Right ventricle myocardium inferior (tissue), 1 donor: ENCODE measurements at regions of chr5 and their contacts with region 1.

Region 1: DNA sequence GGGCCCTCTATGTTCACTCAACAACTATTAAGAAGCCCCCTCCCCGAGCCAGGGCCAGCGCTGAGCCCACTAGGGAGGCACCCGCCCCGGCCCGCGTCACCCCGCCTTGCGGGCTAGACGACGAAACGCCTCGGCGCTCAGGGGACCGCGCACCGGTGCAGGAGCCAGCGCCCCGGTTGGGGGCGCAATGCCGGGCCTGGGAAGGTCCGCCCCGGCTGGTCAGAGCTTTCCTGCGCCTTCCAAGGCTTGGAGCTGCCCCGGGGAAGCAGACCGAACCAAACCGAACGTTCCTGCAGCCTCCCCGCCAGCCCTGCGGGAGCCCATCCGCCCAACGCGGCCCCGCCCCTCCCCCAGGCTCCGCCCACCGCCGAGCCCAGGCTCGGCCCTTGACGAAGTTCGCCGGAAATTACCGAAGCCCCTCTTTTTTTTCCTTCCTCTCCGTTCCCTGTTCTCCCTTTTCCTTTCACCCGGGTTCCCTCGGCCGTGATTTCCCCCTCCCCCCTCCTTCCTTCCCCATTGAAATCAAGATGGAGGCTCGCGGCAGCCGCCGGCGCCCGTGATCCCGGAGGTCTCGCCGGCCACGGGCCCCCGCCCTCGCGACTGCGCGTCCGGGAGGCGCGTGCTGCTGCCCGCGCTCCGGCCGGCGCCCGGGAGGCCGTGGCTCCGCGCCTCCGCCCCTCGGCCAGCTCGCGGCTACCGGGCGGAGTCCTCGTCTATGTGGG is at the start of gene TRIO:
- DNase-seq: peak; percentile 92
- ATAC-seq: peak; percentile 86
- total RNA-seq, gene TRIO: 56.9 TPM

Region 2: GRCh38 chr5:13921578-13921977 is 221.4 kb before region 1 on chr5:
- intact Hi-C with region 1: no loop called
- DNase-seq: no peak
- ATAC-seq: no peak

Region 3: DNA sequence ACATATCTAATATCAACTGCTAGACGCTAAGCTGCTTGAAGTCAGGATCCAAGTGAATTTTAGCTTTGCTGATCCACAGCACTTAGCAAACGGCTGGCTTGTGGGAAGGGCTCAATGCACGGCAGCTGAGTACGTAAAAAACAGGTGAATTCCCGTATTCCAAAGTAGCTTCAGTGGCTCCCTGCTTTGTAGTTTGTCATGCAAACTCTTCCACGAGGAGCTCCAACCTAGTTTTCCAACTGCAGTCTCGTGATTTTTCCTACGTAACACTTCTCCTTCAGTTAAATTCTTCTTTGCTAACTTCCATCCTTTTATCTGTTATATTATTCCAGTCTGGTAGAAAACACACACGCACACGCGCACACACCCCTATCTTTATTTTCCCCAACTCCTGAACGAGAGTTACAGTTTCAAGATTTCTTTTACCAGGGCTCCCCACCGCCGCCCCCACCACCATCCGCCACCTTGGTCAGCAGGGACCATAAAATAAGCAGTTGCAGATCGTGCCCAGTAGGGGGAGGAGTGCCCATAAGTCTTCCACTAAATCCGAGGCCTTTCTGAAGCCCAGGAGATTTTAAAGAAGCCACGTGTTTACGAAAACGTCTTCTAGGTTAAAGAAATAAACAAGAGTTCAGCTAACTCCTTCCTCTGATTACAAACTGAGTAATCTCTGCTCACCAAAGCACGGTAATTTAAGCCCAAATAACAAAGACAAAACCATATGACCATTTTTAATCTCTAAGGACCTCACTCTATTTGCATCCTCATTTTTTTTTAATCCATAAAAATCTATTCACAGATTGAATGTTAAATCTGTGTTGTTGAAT is 34.6 kb before region 1 on chr5:
- intact Hi-C with region 1: loop called (anchors 2 kb)
- DNase-seq: peak; percentile 52
- ATAC-seq: peak; percentile 85

Region 4: DNA sequence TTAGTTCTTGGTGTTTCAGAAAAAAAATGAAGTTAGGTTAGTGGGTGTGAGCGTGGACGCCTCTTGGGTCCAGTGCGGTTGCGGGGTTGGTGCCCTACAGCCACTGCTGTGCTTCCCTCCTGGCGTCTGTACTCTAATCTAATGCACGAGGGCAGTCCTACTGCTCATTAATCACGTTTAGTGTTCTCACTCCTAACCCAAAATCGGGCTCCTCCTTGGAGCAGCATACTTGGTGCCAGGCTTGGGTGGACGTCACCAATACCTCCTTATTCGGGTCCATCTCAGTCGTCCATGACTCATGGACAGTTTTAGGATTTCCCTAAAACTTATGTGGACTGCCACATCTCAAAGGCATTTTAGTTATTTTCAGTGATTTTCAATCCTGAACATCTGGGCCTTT is 41.7 kb after region 1 on chr5:
- intact Hi-C with region 1: loop called (anchors 5 kb)
- DNase-seq: no peak
- ATAC-seq: peak; percentile 7